Endothelial cell of umbilical vein (primary cell): ENCODE measurements at regions of chr16 and their contacts with region 1.

Region 1: DNA sequence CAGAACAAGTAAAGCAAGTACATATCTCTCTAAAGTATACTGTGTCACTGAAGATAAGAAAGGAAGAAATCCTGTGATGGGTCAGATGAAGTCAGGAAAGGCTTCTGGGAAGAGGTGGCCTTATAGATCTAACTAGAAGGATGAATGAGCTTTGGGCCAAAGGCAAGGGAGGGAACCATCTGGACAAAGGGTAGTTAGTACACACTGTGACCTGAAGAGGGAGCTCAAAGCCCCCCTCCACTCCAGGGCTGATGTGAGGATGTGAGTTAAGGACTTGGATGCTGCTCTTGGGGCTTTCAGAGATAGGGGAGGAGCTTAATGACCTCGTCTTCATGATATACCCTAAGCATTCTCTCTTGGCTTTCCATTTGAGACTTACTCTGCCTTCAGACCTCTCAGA is 185.3 kb upstream of the CACNG3 start:
- DNase-seq: peak; percentile 55
- H3K4me3 ChIP-seq: no peak overlapping the region
- H3K27ac ChIP-seq: no peak overlapping the region
- H3K4me1 ChIP-seq: no peaks in the 10 kb centered on the region
- H3K27me3 ChIP-seq: no peaks in the 10 kb centered on the region
- CTCF ChIP-seq: peak; percentile 63 to 75
- POLR2A ChIP-seq: no peak

Region 2: DNA sequence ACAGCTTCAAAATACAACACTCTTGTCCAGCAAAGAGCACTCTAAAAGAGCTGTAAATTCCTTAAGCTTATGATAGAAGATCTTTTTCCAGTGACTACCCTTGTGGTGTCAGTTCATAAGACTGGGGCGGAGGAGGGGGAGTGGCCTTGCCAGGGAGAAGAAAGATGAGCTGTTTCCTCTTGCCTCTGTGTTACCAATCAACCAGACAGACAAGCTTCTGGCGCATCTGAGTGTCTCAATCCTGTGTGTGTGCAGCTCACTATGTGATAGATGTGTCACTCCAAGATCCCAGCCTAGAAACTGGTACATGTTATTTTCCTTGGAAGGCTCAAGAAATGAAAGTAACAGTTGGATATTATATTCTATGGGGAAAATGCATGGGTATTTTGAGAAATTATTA is 17.9 kb after region 1 on chr16:
- CTCF ChIA-PET with region 1: interaction called, 13 read pairs
- POLR2A ChIA-PET with region 1: no interaction called
- dilution Hi-C with region 1: no loop called
- intact Hi-C with region 1: no loop called
- DNase-seq: no peak
- H3K4me3 ChIP-seq: no peak overlapping the region
- H3K27ac ChIP-seq: no peak overlapping the region
- H3K4me1 ChIP-seq: no peaks in the 10 kb centered on the region
- H3K27me3 ChIP-seq: no peaks in the 10 kb centered on the region
- CTCF ChIP-seq: no peak
- POLR2A ChIP-seq: no peak

Region 3: GRCh38 chr16:24151482-24151939 is 80.7 kb after region 1 on chr16:
- CTCF ChIA-PET with region 1: interaction called, 18 read pairs
- POLR2A ChIA-PET with region 1: no interaction called
- dilution Hi-C with region 1: no loop called
- intact Hi-C with region 1: no loop called
- DNase-seq: peak; percentile 88
- H3K4me3 ChIP-seq: peak overlapping the region in 1 of 3 experiments; percentile 30
- H3K27ac ChIP-seq: peak overlapping the region; percentile 97
- H3K4me1 ChIP-seq: peaks cover 36% of the 10 kb centered on the region
- H3K27me3 ChIP-seq: no peaks in the 10 kb centered on the region
- CTCF ChIP-seq: peak; percentile 10 to 17
- POLR2A ChIP-seq: no peak

Region 4: GRCh38 chr16:24204150-24204665 is 133.4 kb after region 1 on chr16:
- CTCF ChIA-PET with region 1: interaction called, 10 read pairs
- POLR2A ChIA-PET with region 1: no interaction called
- dilution Hi-C with region 1: no loop called
- intact Hi-C with region 1: no loop called
- DNase-seq: no peak
- H3K4me3 ChIP-seq: no peak overlapping the region
- H3K27ac ChIP-seq: no peak overlapping the region
- H3K4me1 ChIP-seq: no peaks in the 10 kb centered on the region
- H3K27me3 ChIP-seq: no peaks in the 10 kb centered on the region
- CTCF ChIP-seq: no peak
- POLR2A ChIP-seq: no peak

Region 5: GRCh38 chr16:24347556-24347955 is 276.7 kb after region 1 on chr16:
- CTCF ChIA-PET with region 1: no interaction called
- POLR2A ChIA-PET with region 1: no interaction called
- dilution Hi-C with region 1: no loop called
- intact Hi-C with region 1: no loop called
- DNase-seq: no peak
- H3K4me3 ChIP-seq: no peak overlapping the region
- H3K27ac ChIP-seq: no peak overlapping the region
- H3K4me1 ChIP-seq: no peaks in the 10 kb centered on the region
- H3K27me3 ChIP-seq: no peaks in the 10 kb centered on the region
- CTCF ChIP-seq: no peak
- POLR2A ChIP-seq: no peak

Region 6: GRCh38 chr16:24499193-24499814 is 428.5 kb after region 1 on chr16:
- CTCF ChIA-PET with region 1: interaction called, 104 read pairs
- POLR2A ChIA-PET with region 1: no interaction called
- dilution Hi-C with region 1: no loop called
- intact Hi-C with region 1: loop called (anchors 1 kb)
- DNase-seq: peak; percentile 13
- H3K4me3 ChIP-seq: no peak overlapping the region
- H3K27ac ChIP-seq: no peak overlapping the region
- H3K4me1 ChIP-seq: no peaks in the 10 kb centered on the region
- H3K27me3 ChIP-seq: no peaks in the 10 kb centered on the region
- CTCF ChIP-seq: peak; percentile 39 to 42
- POLR2A ChIP-seq: no peak